ENCODE measurements at regions of chr22 and their contacts with region 1.

Region 1: DNA sequence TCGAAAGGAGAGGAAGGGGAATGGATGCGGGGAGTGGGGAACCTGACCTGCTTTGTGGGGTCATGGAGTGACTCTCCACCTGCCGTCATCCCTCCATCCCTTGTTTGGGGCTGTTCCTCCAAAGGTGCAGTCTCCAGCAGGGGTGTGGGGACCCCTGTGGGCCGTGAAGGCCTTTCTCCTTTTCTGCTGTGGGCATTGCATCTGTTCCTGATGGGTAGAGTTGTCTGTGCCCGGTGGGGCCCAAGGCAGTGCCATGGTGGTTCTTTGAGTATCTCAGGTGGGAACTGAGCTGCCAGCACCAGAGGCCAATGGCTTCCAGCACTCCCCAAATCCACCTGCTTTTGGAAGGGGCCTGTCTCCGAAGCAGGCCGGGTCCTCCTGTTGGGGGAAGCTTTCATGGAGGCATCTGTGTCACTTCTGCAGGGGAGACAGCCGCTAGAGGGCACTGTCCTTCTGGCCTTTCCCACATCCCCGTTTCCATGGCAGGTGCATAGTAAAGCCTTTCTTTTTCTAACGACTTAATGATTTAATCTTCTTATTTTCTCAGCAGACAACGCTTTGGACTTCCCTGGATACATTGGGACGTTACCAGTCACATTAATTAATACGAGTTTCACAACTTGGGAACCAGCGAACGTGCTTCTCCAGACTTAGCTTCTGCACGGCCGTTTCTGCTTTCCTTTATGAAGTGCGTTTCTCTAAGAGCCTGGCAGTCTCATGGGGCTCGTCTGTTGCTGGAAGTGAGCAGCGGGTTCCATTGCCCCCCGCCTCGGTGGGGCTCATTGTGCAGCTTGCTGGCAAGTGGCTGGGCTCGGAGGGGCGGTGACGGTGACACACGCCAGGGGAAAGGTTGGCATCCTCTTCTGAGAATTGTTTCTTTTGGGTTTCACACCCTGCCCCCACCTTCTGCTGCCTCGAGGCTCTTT is 57.1 kb downstream of the PARVB start:
- DNase-seq: peak; percentile 68 to 93 (median 85)

Region 2: DNA sequence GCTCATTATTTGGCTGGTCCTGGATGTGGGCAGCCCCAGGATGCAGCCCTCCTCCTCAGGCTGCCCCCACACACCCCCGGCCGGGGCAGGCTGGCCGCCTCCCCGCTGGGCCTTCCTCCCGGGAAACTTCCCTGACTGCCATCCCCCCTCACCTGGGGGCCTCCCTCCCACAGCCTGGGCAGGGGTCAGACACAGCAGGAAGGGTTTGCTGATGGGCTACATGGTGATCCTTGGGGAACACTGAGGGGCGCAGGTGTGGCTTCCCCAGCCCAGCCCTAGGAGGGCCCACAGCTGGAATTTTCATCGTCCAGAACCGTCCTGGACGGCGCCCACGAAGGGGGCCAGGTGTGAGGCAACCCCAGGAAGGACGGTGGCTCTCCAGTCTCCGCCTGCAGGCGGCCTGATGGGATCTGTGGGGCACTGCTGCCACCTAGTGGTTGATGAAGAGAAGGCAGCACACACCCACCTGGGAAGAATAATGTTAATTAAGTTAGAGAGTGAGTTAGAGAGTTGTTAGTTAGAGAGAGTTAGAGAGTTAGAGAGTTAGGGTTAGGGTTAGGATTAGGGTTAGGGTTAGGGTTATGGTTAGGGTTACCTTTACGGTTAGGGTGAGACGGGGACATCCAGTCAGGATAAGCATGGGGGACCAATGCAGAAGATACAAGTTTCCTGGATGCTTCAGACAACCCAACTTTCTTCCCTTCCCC is 544.9 kb after region 1 on chr22:
- intact Hi-C with region 1: loop called (anchors 5 kb)
- DNase-seq: peak; percentile 44 to 89 (median 76)

Measured in head of caudate nucleus (tissue), 42 donors.